Motor neuron (in vitro differentiated cells): ENCODE measurements at regions of chr5 and their contacts with region 1.

Region 1: GRCh38 chr5:60382716-60383115 is 317.2 kb downstream of the DEPDC1B start:
- ATAC-seq: peak in 3 of 8 experiments; percentile 30 to 59 (median 57)
- H3K4me3 ChIP-seq: no peak overlapping the region
- H3K27ac ChIP-seq: no peak overlapping the region
- H3K4me1 ChIP-seq: peaks cover 0 to 10% of the 10 kb centered on the region in 2 donors

Region 2: DNA sequence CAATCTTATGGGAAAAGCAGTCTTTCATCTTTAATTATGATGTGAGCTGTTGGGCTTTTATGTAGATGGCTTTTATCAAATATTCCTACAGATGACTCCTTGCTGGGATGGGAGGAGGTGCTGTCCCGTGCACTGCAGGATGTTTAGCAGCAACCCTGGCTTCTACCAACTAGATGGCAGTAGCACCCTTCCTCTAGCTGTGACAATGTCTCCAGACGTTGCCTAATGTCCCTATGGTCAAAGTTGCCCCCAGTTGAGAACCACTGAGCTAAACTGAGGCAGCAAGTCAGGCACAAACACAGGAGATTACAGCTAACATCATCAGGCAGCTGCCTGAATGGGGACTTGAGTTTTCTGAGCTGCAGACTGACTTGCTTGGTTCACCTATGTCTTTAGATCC is 87.3 kb before region 1 on chr5:
- in situ Hi-C with region 1: loop called in 1 of 9 experiments (anchors 5 kb)
- ATAC-seq: peak in 4 of 8 experiments; percentile 43 to 96 (median 90)
- H3K4me3 ChIP-seq: no peak overlapping the region
- H3K27ac ChIP-seq: no peak overlapping the region
- H3K4me1 ChIP-seq: peaks cover 0 to 3% of the 10 kb centered on the region in 2 donors

Region 3: GRCh38 chr5:60586307-60586901 is 203.7 kb after region 1 on chr5:
- in situ Hi-C with region 1: loop called in 1 of 9 experiments (anchors 10 kb)
- ATAC-seq: no peak
- H3K4me3 ChIP-seq: no peak overlapping the region
- H3K27ac ChIP-seq: no peak overlapping the region
- H3K4me1 ChIP-seq: no peaks in the 10 kb centered on the region